Activated naive CD8-positive, alpha-beta T cell treated with anti-CD3 and anti-CD28 coated beads, Interleukin-2, amount 10 ng/mL, durations not matched to agents 7 days and 5 days (primary cell): ENCODE measurements at regions of chr1 and their contacts with region 1.

Region 1: GRCh38 chr1:61049850-61050540 is 32.4 kb upstream of the NFIA start:
- DNase-seq: peak; percentile 93
- ATAC-seq: peak; percentile 77
- H3K4me3 Mint-ChIP-seq: peak overlapping the region; percentile 84
- H3K27ac Mint-ChIP-seq: no peak overlapping the region
- H3K4me1 Mint-ChIP-seq: peaks cover 23% of the 10 kb centered on the region
- H3K27me3 Mint-ChIP-seq: peaks cover 49% of the 10 kb centered on the region

Region 2: GRCh38 chr1:60765204-60765603 is 284.8 kb before region 1 on chr1:
- POLR2A ChIA-PET with region 1: no interaction called
- DNase-seq: no peak
- ATAC-seq: no peak
- H3K4me3 Mint-ChIP-seq: no peak overlapping the region
- H3K27ac Mint-ChIP-seq: no peak overlapping the region
- H3K4me1 Mint-ChIP-seq: no peaks in the 10 kb centered on the region
- H3K27me3 Mint-ChIP-seq: no peaks in the 10 kb centered on the region

Region 3: GRCh38 chr1:61067404-61068019 is 17.5 kb after region 1 on chr1:
- POLR2A ChIA-PET with region 1: no interaction called
- DNase-seq: no peak
- ATAC-seq: no peak
- H3K4me3 Mint-ChIP-seq: no peak overlapping the region
- H3K27ac Mint-ChIP-seq: no peak overlapping the region
- H3K4me1 Mint-ChIP-seq: no peaks in the 10 kb centered on the region
- H3K27me3 Mint-ChIP-seq: peaks cover 9% of the 10 kb centered on the region

Region 4: GRCh38 chr1:61077676-61078541 is 27.9 kb after region 1 on chr1:
- POLR2A ChIA-PET with region 1: interaction called, 24 read pairs
- DNase-seq: peak; percentile 77
- ATAC-seq: peak; percentile 85
- H3K4me3 Mint-ChIP-seq: peak overlapping the region; percentile 95
- H3K27ac Mint-ChIP-seq: peak overlapping the region; percentile 98
- H3K4me1 Mint-ChIP-seq: peaks cover 38% of the 10 kb centered on the region
- H3K27me3 Mint-ChIP-seq: peaks cover 39% of the 10 kb centered on the region

Region 5: DNA sequence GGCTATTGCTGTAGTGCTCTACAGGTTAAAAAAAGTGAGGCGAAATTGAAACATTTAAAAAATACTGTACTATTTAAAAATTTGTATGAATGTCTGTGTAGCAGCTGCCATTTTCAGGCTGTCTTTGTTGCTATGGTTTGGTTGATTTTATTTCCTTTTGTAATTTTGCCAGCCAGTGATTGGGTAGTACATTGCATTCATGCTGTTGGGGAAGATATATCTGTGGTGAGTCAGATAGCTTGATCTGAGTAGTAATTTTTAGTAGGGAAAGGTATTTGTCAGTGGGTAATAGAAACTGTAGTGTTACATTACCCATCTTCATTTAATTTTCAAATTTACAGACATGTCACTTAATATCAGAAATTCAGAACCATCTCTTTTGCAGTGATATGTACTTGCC is 47.3 kb after region 1 on chr1:
- POLR2A ChIA-PET with region 1: no interaction called
- DNase-seq: no peak
- ATAC-seq: no peak
- H3K4me3 Mint-ChIP-seq: no peak overlapping the region
- H3K27ac Mint-ChIP-seq: no peak overlapping the region
- H3K4me1 Mint-ChIP-seq: no peaks in the 10 kb centered on the region
- H3K27me3 Mint-ChIP-seq: peaks cover 6% of the 10 kb centered on the region

Region 6: DNA sequence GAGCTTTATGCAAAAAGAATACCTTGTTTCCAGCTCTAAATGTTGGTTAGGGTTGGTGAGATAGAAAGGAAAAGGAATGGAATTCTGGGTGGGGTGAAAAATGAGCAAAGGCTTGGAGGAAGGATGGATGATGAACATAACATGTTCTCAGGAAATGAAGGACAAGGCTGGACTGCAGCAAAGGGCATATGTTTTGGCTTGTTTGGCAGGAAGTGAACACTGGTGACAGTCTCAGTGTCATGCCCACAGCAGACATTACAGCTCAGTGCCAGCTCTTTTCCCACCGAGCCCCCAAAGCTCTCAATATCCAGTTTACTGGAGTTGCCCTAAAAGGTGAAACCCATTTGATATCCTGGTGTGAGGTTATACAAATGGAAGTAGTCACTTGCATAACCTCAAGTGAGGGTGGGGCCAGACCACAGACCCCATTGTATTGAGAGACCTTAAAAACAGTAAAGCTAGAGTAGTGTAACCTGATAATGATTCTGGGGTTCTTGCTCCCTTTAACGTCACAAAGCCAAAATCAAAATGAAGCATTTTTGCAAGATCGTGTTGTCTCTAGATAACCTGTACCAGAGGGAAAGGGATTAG is 302.9 kb after region 1 on chr1:
- POLR2A ChIA-PET with region 1: no interaction called
- DNase-seq: no peak
- ATAC-seq: no peak
- H3K4me3 Mint-ChIP-seq: no peak overlapping the region
- H3K27ac Mint-ChIP-seq: no peak overlapping the region
- H3K4me1 Mint-ChIP-seq: no peaks in the 10 kb centered on the region
- H3K27me3 Mint-ChIP-seq: no peaks in the 10 kb centered on the region